ENCODE measurements at regions of chr2 and their contacts with region 1.

Region 1: DNA sequence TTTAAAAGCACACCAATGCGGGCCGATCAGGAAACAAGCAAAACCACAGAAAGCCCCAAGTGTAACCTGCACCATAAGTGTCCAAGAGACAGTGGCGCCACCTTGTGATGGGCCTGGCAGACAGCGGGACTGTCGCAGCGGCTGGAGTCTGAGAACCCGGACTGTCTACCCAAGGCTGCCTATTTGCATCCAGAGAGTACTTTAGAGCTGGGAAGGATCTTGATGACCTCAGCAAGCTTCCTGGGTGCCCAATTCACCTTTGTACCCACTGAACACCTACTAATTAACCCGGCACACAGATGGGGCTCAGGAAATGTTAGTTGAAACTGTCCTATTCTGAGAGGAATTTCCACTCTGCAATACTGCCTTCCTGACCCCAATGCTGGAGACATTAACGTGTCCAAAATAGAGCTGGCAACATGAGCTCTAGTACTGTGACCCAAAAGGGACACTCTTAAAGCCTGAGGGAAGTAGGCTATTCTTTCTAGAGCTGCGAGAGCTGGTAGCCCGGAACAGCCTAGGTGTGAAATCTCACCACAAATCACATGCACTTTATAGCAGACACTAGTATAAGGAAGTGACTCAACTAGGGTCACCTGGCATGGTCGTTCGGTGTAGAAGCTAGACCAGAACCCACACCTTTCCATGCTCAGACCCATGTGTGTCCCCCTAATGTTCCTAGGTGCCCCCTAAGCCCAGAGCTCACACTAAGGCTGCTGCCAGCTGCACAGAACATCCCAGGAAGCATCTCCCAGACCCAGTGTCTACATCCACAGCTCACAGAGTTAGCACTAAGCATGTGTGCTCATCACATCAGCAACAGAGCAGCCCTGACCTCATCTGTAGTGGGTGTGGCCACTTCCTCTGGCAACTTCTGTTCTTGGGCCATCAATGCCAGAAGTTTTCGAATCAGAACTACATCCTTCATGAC is 25.4 kb downstream of the POLR1A start:
- DNase-seq: peak; percentile 86
- H3K4me3 Mint-ChIP-seq: no peak overlapping the region
- H3K27ac Mint-ChIP-seq: peak overlapping the region; percentile 65
- H3K4me1 Mint-ChIP-seq: peaks cover 27% of the 10 kb centered on the region
- H3K27me3 Mint-ChIP-seq: no peaks in the 10 kb centered on the region

Region 2: GRCh38 chr2:86068136-86068588 is 12.1 kb before region 1 on chr2:
- CTCF ChIA-PET with region 1: interaction called, 10 read pairs
- POLR2A ChIA-PET with region 1: no interaction called
- intact Hi-C with region 1: no loop called
- DNase-seq: peak; percentile 72
- H3K4me3 Mint-ChIP-seq: no peak overlapping the region
- H3K27ac Mint-ChIP-seq: peak overlapping the region; percentile 29
- H3K4me1 Mint-ChIP-seq: peaks cover 13% of the 10 kb centered on the region
- H3K27me3 Mint-ChIP-seq: no peaks in the 10 kb centered on the region

Measured in activated CD4-positive, alpha-beta memory T cell treated with anti-CD3 and anti-CD28 coated beads for 36 hours (primary cell).